ENCODE measurements at regions of chr5 and their contacts with region 1.

Region 1: DNA sequence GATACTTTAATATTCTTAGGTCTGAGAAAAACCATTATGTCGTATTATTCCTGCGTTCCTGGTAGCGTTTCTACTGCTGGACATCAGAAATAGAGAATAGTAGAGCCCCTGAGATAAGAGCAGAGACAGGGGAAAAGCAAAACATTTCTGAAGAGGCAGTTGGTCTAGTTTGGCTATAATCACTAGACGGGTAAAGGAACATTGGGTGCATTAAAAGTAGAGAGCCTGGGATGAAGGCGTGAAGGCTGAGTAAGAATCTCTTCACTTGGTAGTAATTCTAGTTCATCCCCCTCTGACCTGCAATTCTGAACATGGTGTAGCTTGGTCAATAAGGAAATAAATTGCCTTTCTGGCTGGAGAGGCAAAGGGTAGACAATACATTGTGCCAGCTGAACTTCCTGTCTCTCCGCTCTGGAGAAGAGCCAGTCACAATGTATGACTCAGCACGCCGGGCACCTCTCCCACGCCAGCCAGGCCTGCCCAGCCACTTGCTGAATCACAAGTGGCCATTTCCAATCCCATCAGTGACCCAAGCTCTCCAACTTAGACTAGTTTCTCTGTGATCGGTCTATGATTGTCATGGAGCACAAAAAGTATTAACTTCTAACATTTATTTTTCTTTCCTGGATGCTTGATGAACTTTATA is 75.4 kb downstream of the STK32A start:
- DNase-seq: peak; percentile 51 to 92
- H3K4me3 ChIP-seq: no peak overlapping the region
- H3K27ac ChIP-seq: peak overlapping the region; percentile 73 to 75
- H3K4me1 ChIP-seq: peaks cover 0 to 16% of the 10 kb centered on the region in 2 donors
- H3K27me3 ChIP-seq: no peaks in the 10 kb centered on the region
- CTCF ChIP-seq: no peak

Region 2: GRCh38 chr5:147403651-147404640 is 93.8 kb after region 1 on chr5:
- intact Hi-C with region 1: loop called (anchors 1 kb)
- DNase-seq: peak; percentile 76 to 94
- H3K4me3 ChIP-seq: peak overlapping the region; percentile 7 to 36
- H3K27ac ChIP-seq: peak overlapping the region; percentile 94 to 98
- H3K4me1 ChIP-seq: peaks cover 22 to 50% of the 10 kb centered on the region in 2 donors
- H3K27me3 ChIP-seq: no peaks in the 10 kb centered on the region
- CTCF ChIP-seq: no peak